CD14-positive monocyte (primary cell): ENCODE measurements at regions of chr14 and their contacts with region 1.

Region 1: GRCh38 chr14:92507174-92507768 is 6.3 kb upstream of the RIN3 start:
- DNase-seq: peak; percentile 70 to 89 (median 87)
- H3K4me3 ChIP-seq: peak overlapping the region in 1 of 3 experiments; percentile 59
- H3K4me3 Mint-ChIP-seq: peak overlapping the region in 1 of 2 donors; percentile 61
- H3K27ac ChIP-seq: peak overlapping the region; percentile 80 to 88
- H3K27ac Mint-ChIP-seq: peak overlapping the region; percentile 86 to 97 (median 93)
- H3K4me1 ChIP-seq: peaks cover 54 to 77% of the 10 kb centered on the region in 2 donors
- H3K4me1 Mint-ChIP-seq: peaks cover 72% of the 10 kb centered on the region
- H3K27me3 ChIP-seq: peaks cover 0 to 6% of the 10 kb centered on the region in 2 donors
- H3K27me3 Mint-ChIP-seq: peaks cover 12 to 31% (median 25%) of the 10 kb centered on the region in 3 donors
- CTCF ChIP-seq: no peak

Region 2: DNA sequence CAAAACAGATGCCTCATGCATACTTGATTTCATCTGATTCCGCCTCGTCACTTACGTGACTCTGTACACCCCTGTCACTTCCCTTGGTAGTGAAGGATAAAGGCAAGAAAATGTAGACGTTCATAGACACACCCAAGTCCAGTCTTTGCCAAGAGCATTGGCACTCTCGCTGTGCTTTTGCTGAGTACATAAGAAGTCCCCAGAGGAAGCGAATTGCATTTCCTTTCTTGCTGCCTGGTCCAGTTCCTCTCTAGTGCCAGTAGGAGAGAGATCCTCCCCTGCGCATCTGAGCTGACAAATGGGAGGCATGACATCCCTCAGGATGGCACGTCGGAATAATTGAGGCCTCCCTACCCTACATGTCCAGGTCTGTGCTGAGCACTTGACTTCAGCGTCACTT is 15.0 kb before region 1 on chr14:
- intact Hi-C with region 1: loop called in 1 of 2 experiments (anchors 2 kb)
- DNase-seq: peak; percentile 91 to 97 (median 96)
- H3K4me3 ChIP-seq: peak overlapping the region in 1 of 3 experiments; percentile 30
- H3K4me3 Mint-ChIP-seq: peak overlapping the region in 1 of 2 donors; percentile 73
- H3K27ac ChIP-seq: peak overlapping the region; percentile 90 to 97
- H3K27ac Mint-ChIP-seq: peak overlapping the region; percentile 96 to 99 (median 98)
- H3K4me1 ChIP-seq: peaks cover 89 to 100% of the 10 kb centered on the region in 2 donors
- H3K4me1 Mint-ChIP-seq: peaks cover 94% of the 10 kb centered on the region
- H3K27me3 ChIP-seq: no peaks in the 10 kb centered on the region
- H3K27me3 Mint-ChIP-seq: peaks cover 0 to 5% (median 0%) of the 10 kb centered on the region in 3 donors
- CTCF ChIP-seq: peak; percentile 35

Region 3: DNA sequence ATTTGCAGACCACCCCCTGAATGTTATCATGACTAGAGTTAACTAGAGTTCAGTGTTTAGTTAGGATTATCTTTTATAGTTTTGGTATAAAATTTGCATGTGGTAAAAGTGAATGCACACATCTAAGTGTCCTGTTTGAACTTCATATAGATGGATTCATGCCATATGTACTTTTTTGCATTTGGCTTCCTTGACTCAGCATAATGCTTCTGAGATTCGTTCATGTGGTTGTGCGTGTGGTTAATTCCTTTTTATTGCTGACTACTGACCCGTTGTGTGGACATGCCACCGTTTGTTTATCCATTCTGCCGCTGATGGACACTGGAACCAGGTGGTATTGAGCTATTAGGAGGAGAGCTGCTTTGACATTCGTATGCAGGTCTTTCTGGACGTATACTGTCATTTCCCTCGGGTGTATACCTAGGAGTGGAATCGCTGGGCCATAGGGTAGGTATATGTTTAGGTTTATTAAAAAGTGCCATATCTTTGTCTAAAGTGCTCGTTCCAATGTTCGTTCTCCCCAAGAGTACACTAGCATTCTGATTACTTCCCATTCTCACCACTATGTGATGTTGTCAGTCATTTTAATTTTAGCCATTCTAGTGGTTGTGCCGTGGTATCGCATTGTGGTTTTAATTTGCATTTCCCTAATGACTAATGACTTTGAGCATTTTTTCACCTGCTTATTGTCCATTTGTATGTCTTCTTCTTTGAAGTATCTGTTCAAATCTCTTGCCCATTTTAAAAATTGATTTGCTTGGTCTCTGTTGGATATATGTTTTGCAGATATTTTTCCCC is 44.0 kb after region 1 on chr14:
- intact Hi-C with region 1: no loop called
- DNase-seq: peak; percentile 44 to 69 (median 64)
- H3K4me3 ChIP-seq: no peak overlapping the region
- H3K4me3 Mint-ChIP-seq: peak overlapping the region; percentile 20 to 53
- H3K27ac ChIP-seq: peak overlapping the region in 1 of 2 donors; percentile 7
- H3K27ac Mint-ChIP-seq: peak overlapping the region in 2 of 7 donors; percentile 30 to 59
- H3K4me1 ChIP-seq: peaks cover 40 to 57% of the 10 kb centered on the region in 2 donors
- H3K4me1 Mint-ChIP-seq: peaks cover 57% of the 10 kb centered on the region
- H3K27me3 ChIP-seq: peaks cover 0 to 4% of the 10 kb centered on the region in 2 donors
- H3K27me3 Mint-ChIP-seq: peaks cover 11 to 24% (median 14%) of the 10 kb centered on the region in 3 donors
- CTCF ChIP-seq: peak; percentile 70